Mammary epithelial cell (primary cell): ENCODE measurements at regions of chr19 and their contacts with region 1.

Region 1: DNA sequence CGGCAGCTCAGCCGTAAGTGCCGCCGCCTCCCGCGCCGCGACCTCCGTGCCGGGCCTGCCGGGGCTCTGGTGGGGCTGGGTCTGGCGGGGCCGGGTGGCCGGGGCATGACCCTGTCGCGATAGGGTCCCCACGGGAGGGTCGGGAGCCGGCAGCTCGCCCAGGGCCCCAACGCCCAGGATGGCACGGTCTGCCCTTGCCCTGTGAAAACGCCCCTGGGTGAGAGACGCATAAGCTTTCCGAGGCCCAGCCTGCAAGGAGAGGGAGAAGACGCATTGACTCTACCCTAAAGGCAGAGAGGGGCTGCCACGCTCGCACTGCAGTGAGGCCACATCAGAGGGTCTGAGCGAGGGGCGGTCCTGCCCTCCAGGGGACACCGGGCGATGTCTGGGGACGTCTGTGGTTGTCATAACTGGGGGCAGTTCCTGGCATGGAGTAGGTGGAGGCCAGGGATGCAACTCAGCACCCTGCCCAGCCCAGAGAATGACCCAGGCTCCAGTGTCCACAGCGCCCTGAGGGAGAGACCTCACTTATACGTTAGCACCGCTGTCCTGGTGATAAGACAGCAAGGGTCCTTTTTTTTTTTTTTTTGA is 539 bp downstream of the ZNF554 start:
- DNase-seq: no peak
- H3K4me3 ChIP-seq: peak overlapping the region; percentile 79 to 96 (median 85)
- H3K27ac ChIP-seq: peak overlapping the region; percentile 30
- H3K4me1 ChIP-seq: no peaks in the 10 kb centered on the region
- H3K27me3 ChIP-seq: no peaks in the 10 kb centered on the region
- CTCF ChIP-seq: no peak

Region 2: DNA sequence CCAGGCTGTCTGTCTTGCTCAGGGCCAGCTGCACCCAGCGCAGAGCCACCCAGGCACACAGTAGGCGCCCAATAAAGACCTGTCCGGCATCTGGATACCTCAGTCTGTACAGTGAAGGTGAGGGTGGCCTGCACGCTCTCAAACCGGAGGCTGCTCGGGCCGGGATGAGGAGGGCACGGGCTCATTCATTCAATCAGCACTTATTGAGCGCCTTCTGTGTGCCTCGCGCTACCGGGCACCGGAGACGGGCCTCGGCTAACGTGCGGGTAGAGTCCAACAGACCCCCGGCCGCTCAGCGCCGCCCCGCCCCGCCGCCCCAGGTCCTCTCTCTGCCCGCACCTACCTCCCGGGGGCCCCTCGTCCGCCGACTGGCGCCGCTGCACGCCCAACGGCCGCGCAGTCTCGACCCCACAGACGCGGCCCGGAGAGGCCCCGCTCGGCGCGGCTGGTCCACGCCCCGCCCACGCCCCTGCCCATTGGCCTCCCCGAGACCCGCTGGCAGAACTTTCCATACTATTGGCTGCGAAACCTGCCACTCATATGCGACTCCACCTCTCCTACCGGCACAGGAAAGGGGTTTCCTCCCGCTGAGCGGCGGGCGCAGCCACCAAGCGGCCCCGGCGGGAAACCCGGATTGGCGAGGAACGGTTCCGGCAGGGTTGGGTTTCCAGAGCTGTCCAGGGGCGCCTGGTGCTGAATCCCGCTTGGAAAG is 80.4 kb before region 1 on chr19 and contains the start of gene SLC39A3:
- CTCF ChIA-PET with region 1: no interaction called
- dilution Hi-C with region 1: loop called (anchors 10 kb)
- in situ Hi-C with region 1: no loop called
- intact Hi-C with region 1: no loop called
- DNase-seq: peak; percentile 96
- H3K4me3 ChIP-seq: peak within 1 kb of the TSS; percentile 88 to 92 (median 92)
- H3K27ac ChIP-seq: no peak within 1 kb of the TSS
- H3K4me1 ChIP-seq: no peaks in the 10 kb centered on the region
- H3K27me3 ChIP-seq: no peaks in the 10 kb centered on the region
- CTCF ChIP-seq: peak in 1 of 2 donors; percentile 26
- total RNA-seq, gene SLC39A3: 32.6 to 34.7 TPM

Region 3: GRCh38 chr19:2759362-2759761 is 60.8 kb before region 1 on chr19:
- CTCF ChIA-PET with region 1: no interaction called
- dilution Hi-C with region 1: no loop called
- in situ Hi-C with region 1: no loop called
- intact Hi-C with region 1: loop called (anchors 2 kb)
- DNase-seq: no peak
- H3K4me3 ChIP-seq: no peak overlapping the region
- H3K27ac ChIP-seq: no peak overlapping the region
- H3K4me1 ChIP-seq: no peaks in the 10 kb centered on the region
- H3K27me3 ChIP-seq: no peaks in the 10 kb centered on the region
- CTCF ChIP-seq: no peak

Region 4: DNA sequence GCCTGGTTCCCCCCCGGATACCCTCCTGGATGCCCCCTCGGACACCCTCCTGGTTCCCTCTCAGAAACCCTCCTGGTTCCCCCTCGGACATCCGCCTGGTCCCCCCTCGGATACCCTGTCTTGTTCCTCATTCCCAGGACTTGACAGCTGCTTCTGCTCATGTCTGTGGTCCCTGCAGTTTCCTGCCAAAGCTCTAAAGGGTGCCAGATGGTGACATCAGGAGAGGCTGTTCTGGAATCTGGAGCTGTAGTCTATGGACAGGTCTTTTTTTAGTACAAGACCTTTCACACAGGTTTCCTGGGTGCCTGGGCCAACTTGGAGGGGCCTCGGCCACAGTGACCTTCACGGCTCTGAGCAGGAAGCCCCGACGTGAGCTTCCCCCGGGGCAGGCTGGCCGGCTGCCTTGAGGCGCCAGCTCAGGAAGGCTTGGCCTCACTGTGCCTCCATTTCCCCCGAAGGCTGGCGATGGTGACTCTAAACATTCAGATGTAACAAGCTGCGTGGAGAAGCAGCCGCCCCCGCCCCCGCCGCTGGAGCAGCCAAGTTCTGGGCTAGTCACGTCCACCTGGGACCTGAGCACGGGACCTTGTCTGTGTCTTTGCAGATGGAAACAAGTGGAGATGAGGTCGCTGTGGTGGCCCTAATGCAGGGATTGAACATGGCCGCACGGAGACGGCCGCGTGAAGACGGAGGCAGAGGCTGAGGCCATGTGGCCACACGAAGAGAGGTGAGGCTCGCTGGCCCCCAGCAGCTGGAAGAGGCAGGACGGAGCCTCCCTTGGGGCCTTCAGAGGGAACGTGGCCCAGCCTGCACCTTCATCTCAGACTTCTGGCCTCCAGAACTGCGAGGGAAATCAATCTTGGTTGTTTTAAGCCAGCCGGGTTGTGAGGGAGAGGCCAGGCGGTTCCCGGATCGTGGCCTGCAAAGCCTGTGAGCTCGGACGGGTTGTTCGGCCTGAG is 49.9 kb before region 1 on chr19:
- CTCF ChIA-PET with region 1: no interaction called
- dilution Hi-C with region 1: no loop called
- in situ Hi-C with region 1: no loop called
- intact Hi-C with region 1: no loop called
- DNase-seq: no peak
- H3K4me3 ChIP-seq: no peak overlapping the region
- H3K27ac ChIP-seq: no peak overlapping the region
- H3K4me1 ChIP-seq: no peaks in the 10 kb centered on the region
- H3K27me3 ChIP-seq: no peaks in the 10 kb centered on the region
- CTCF ChIP-seq: no peak

Region 5: DNA sequence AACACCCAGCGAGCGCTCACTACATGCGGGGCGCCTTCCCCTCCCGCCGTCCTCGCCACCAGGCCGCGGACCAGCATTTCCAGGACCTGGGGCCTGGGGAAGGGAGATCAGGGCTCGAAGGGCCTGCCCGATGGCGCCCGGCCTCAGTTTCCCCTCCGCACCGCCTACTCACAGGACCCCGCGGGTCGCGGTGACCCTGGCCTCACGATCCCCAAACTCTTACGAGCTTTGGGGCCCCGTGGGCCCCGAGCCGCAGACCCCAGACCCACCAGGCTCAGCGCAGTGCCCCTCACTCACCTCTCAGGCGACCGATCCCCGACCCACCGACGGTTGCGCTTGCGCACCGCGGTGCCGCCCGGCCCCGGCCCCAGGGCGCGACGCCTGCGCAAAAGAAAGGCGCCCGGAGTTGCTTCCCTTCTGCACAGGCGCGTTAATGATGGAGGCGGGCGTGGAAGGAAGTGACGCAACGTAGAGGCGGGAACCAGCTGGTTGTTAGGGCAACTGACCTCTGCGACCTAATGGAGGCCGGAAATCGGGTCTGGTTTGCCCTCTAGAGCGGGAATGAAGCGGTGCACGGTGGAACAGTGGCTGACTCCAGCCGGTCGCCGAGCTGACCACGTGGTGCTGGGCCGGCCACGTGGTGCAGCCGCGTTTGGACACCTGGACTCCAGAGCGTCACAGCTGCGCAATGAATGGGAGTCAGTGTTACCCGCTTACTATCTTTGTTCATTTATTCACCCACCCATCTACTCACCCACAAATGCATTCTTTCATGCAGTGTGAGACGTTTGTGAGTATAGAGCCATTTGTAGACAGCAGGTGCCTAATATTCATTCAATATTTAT is 37.0 kb before region 1 on chr19 and contains the start of gene SGTA:
- CTCF ChIA-PET with region 1: no interaction called
- dilution Hi-C with region 1: no loop called
- in situ Hi-C with region 1: no loop called
- intact Hi-C with region 1: loop called (anchors 1 kb)
- DNase-seq: peak; percentile 99
- H3K4me3 ChIP-seq: peak within 1 kb of the TSS; percentile 89 to 98 (median 91)
- H3K27ac ChIP-seq: peak within 1 kb of the TSS; percentile 82
- H3K4me1 ChIP-seq: peaks cover 14% of the 10 kb centered on the region
- H3K27me3 ChIP-seq: no peaks in the 10 kb centered on the region
- CTCF ChIP-seq: peak; percentile 18 to 56
- total RNA-seq, gene SGTA: 52.5 to 71.3 TPM

Region 6: GRCh38 chr19:2902590-2903218 is 82.5 kb after region 1 on chr19:
- CTCF ChIA-PET with region 1: no interaction called
- dilution Hi-C with region 1: no loop called
- in situ Hi-C with region 1: no loop called
- intact Hi-C with region 1: no loop called
- DNase-seq: no peak
- H3K4me3 ChIP-seq: no peak overlapping the region
- H3K27ac ChIP-seq: no peak overlapping the region
- H3K4me1 ChIP-seq: peaks cover 21% of the 10 kb centered on the region
- H3K27me3 ChIP-seq: no peaks in the 10 kb centered on the region
- CTCF ChIP-seq: no peak